BJ (cell line): ENCODE measurements at regions of chr1 and their contacts with region 1.

Region 1: GRCh38 chr1:205141236-205142101 is 19.7 kb upstream of the RBBP5 start:
- DNase-seq: peak; percentile 23
- H3K4me3 ChIP-seq: no peak overlapping the region
- H3K27me3 ChIP-seq: no peaks in the 10 kb centered on the region
- CTCF ChIP-seq: peak; percentile 68

Region 2: DNA sequence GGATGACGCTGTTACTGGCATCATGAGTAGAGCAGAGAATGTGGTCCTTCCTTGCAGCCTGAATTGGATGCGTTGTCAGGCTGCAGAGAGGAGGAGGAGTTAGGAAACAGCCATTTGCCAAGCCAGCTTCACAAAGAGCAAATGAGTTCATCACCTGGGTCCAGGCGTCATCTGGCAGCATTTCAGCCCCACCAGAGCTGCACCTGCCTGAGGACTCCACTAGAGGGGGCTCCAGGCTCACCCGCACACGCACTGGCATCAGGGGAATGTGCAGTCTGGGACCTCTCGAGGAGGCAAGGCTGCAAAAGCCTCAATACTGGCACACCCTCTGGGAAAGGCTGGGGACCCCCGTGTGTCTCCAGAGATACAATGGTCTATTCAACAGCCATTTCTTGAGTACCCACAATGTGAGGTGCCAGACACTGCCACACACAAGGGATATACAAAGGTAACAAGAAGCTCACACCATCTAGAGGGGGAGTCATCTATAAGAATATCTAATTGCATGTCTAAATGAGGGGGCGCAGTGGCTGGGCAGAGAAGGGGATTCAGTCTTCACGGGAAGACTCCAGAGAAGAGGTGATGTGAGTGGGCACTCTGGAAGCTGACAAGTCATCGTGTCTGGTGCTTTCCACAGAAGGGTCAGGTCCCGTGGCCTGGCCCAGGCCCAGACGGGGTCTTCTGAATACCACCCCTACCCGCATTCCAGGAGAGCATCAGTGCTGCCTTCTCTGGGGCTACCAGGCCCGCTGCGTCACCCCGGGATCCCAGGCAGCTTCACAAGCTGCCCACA is 152.0 kb before region 1 on chr1:
- CTCF ChIA-PET with region 1: interaction called, 12 read pairs
- POLR2A ChIA-PET with region 1: no interaction called
- DNase-seq: peak; percentile 16
- H3K4me3 ChIP-seq: no peak overlapping the region
- H3K27me3 ChIP-seq: no peaks in the 10 kb centered on the region
- CTCF ChIP-seq: peak; percentile 99

Region 3: DNA sequence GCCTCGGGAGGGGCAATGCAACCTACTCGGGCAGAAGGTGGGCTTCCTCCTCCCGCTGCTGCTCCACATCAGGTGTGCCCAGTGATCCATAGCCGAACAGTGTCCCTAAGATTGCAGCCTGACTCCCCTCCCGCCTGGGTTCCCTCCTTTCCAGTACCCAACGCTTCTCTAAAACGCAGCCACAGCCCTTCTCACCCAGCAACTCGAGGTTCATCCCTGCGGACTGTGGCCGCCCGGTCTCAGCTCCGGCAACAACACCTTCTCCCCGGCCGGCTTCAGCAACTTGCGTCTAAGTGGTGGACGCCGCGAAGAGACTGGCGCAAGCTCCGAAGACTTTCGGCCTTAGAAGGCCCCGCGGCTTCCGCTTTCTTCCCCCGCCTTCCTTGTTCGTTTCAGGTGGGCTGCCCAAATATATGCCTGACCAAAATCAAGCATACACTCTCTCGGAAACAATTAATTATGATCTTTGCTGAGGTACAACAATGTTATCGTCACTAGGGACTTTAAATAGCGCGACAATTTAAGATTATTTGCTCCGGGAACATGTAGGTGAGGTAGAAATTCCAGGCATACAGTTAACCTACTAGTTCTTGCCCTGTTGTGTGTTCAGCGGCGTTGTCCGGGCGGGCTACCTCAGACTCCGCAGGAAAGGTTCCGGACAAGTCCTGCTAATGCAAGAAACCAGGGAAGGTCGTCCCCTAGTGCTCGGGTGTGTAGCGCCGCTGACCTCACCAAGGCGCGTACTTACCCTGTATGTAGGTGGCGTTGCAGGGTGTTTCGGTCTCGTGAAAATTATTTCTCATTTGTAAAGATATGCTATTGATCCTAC is 19.6 kb before region 1 on chr1 and contains the start of gene RBBP5:
- CTCF ChIA-PET with region 1: interaction called, 17 read pairs
- POLR2A ChIA-PET with region 1: no interaction called
- DNase-seq: peak; percentile 86
- H3K4me3 ChIP-seq: peak within 1 kb of the TSS; percentile 76
- H3K27me3 ChIP-seq: no peaks in the 10 kb centered on the region
- CTCF ChIP-seq: peak; percentile 92
- polyA plus RNA-seq, gene RBBP5: 6.4 and 10.8 TPM in 2 replicates

Region 4: DNA sequence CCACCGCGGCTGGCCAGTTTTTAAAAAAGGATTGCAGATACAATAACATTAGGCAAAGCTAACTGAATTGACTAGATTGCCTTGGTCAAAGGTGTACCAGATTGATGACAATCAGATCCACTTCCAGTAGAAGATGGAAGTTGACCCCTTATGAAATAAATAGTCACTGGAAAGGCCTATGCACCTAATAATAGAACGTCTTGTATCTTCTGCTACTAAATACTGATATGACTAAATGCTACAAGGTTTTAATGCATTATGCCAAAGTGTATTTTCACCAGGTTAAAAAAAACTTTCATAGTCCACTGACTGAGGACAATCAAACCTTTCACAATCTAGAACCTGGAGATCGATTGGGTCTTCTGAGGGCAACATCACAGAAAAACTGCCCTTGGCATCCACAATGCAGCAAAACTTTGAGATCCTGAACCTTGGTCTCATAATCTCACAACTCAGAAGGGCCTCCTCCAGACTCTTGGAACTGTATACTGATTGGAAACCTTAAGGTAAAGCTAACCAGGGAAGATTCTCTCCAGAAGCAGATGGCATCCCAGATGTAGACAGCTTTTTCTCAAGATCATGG is 11.9 kb before region 1 on chr1:
- CTCF ChIA-PET with region 1: interaction called, 24 read pairs
- POLR2A ChIA-PET with region 1: no interaction called
- DNase-seq: no peak
- H3K4me3 ChIP-seq: no peak overlapping the region
- H3K27me3 ChIP-seq: no peaks in the 10 kb centered on the region
- CTCF ChIP-seq: no peak

Region 5: GRCh38 chr1:205375835-205376545 is 234.5 kb after region 1 on chr1:
- CTCF ChIA-PET with region 1: no interaction called
- POLR2A ChIA-PET with region 1: no interaction called
- DNase-seq: peak; percentile 10
- H3K4me3 ChIP-seq: no peak overlapping the region
- H3K27me3 ChIP-seq: peaks cover 3% of the 10 kb centered on the region; the same call in 1 of the 2 replicates
- CTCF ChIP-seq: 0 out of 2 replicates have a peak, but pooled peaks have one; percentile 3